BJ (cell line): ENCODE measurements at regions of chr3 and their contacts with region 1.

Region 1: GRCh38 chr3:121942116-121942788 is 48.1 kb downstream of the SLC15A2 start:
- DNase-seq: no peak
- H3K4me3 ChIP-seq: no peak overlapping the region
- H3K27me3 ChIP-seq: no peaks in the 10 kb centered on the region
- CTCF ChIP-seq: no peak

Region 2: GRCh38 chr3:121641127-121641526 is 301.1 kb before region 1 on chr3:
- CTCF ChIA-PET with region 1: no interaction called
- POLR2A ChIA-PET with region 1: interaction called, 18 read pairs
- DNase-seq: no peak
- H3K4me3 ChIP-seq: no peak overlapping the region
- H3K27me3 ChIP-seq: no peaks in the 10 kb centered on the region; the same call in 1 of the 2 replicates
- CTCF ChIP-seq: no peak

Region 3: DNA sequence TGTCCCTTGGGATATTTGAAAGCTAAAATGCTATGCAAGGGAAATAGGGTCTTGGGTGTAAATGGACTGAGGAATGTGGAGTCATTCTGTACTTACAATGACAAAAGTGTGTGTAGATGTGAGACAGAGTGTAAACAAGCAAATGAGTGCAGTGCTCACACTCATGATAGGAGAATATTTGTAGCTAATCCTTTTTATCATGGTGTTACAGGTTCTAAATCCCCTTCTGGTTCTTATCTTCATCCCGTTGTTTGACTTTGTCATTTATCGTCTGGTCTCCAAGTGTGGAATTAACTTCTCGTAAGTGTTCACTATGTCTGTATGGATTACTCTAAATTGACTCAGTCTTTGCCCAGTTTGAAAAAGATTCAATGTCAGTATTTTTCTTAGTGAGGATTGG is 17.5 kb before region 1 on chr3:
- CTCF ChIA-PET with region 1: no interaction called
- POLR2A ChIA-PET with region 1: no interaction called
- DNase-seq: no peak
- H3K4me3 ChIP-seq: no peak overlapping the region
- H3K27me3 ChIP-seq: no peaks in the 10 kb centered on the region
- CTCF ChIP-seq: no peak

Region 4: DNA sequence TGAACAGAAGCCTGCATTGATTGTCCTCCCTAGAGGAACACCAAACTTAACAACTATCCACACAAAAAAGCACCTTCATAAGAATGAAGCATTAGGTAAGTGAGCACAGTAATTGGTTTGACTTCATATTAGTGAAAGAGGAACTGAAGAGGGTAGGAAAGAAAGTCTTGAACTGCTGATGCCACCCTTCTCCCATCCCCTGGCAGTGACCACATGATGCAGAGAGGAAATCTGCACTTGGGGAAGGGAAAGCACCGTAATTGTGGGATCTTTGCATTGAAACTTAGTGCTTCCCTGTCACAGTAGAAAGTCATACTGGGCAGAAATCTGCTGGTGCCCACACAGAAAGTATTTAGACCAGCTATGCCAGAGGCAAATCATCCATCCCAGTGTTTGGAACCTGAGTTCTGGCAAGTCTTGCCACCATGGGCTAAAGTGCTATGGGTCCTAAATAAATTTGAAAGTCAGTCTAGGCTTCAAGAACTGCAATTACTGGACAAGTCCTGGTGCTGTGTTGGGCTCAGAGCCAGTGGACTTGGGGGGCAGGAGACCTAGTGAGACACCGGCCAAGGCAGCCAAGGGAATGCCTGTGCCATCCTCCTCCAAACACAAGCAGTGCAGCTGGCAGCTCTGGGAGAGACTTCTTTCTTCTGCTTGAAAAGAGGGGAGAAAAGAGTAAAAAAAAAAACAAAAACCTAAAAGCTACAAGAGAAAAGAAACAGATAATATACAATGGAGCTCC is 15.6 kb after region 1 on chr3:
- CTCF ChIA-PET with region 1: no interaction called
- POLR2A ChIA-PET with region 1: no interaction called
- DNase-seq: no peak
- H3K4me3 ChIP-seq: no peak overlapping the region
- H3K27me3 ChIP-seq: peaks cover 3% of the 10 kb centered on the region; the same call in 1 of the 2 replicates
- CTCF ChIP-seq: no peak

Region 5: DNA sequence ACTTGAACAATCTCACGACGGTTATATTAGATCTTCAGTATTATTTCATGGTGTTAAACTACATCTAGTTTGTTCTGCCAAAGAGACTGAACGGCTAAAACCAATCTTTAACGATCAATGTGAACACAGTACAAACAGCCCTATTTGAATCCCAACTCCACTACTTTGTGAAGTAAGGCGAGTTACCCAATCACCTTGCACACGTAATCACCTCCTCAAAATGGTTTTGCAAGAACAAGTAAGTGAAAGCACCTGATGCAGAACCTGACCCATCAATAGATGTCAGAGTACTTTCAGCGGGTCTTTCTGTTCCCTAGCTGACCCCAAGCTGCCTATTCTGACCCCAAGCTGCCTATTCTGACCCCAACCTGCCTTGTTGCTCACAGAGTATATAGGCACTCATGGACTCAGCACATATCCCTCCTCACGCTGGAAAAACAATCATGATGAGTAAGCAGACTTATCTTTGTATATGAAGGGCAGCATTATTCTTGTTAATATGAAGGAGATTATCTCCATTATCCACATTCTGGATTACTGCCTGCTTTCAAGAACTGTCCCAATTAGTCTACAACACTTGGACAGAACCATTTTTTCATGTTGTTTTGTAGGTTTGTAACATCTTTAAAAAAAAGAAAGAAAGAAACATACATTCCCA is 568.8 kb after region 1 on chr3:
- CTCF ChIA-PET with region 1: no interaction called
- POLR2A ChIA-PET with region 1: no interaction called
- DNase-seq: no peak
- H3K4me3 ChIP-seq: no peak overlapping the region
- H3K27me3 ChIP-seq: no peaks in the 10 kb centered on the region
- CTCF ChIP-seq: no peak